ENCODE measurements at regions of chr19 and their contacts with region 1.

Region 1: GRCh38 chr19:10095948-10096621 is 6.4 kb downstream of the ANGPTL6 start:
- DNase-seq: peak; percentile 79 to 96
- H3K4me3 ChIP-seq: peak overlapping the region; percentile 29 to 57 (median 39)
- H3K27ac ChIP-seq: no peak overlapping the region
- H3K4me1 ChIP-seq: peaks cover 0 to 6% (median 2%) of the 10 kb centered on the region in 4 experiments; a peak in 3 of 7 replicates
- H3K27me3 ChIP-seq: peaks cover 8 to 29% (median 23%) of the 10 kb centered on the region in 4 experiments
- CTCF ChIP-seq: 0 out of 4 replicates have a peak, but pooled peaks of 1 of the 3 experiments have one; percentile 6
- EP300 ChIP-seq: no peak
- POLR2A ChIP-seq: peak in 1 of 2 experiments; percentile 71; a peak in 2 of 3 replicates
- RAD21 ChIP-seq: no peak

Region 2: DNA sequence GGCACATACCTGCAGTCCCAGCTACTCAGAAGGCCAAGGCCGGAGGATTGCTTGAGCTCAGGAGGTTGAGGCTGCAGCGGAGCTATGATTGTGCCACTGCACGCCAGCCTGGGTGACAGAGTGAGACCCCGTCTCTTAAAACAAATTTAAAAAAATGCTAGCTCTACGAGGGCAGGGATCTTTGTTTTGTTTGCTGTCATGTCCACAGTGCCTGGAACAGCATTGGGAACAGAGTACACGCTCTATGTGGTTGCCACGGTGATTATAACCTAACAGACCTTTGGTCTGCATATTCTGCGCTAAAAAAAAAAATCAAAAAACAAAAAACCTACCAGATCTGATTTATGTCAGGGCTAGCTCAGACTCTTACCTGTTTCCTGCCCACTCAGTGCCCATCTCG is 12.2 kb before region 1 on chr19:
- CTCF ChIA-PET with region 1: interaction called, 14 read pairs
- POLR2A ChIA-PET with region 1: interaction called, 3 read pairs
- DNase-seq: no peak
- H3K4me3 ChIP-seq: no peak overlapping the region
- H3K27ac ChIP-seq: no peak overlapping the region
- H3K4me1 ChIP-seq: peaks cover 0 to 4% (median 3%) of the 10 kb centered on the region in 4 experiments; a peak in 4 of 7 replicates
- H3K27me3 ChIP-seq: peaks cover 0 to 2% (median 0%) of the 10 kb centered on the region in 4 experiments; a peak in 1 of 7 replicates
- CTCF ChIP-seq: no peak
- EP300 ChIP-seq: no peak
- POLR2A ChIP-seq: no peak
- RAD21 ChIP-seq: no peak

Region 3: GRCh38 chr19:10106100-10106936 is 10.2 kb after region 1 on chr19 and contains the start of gene PPAN:
- CTCF ChIA-PET with region 1: interaction called, 5 read pairs
- POLR2A ChIA-PET with region 1: interaction called, 240 read pairs
- DNase-seq: peak; percentile 90 to 97
- H3K4me3 ChIP-seq: peak within 1 kb of the TSS; percentile 78 to 95 (median 93)
- H3K27ac ChIP-seq: peak within 1 kb of the TSS; percentile 92
- H3K4me1 ChIP-seq: peaks cover 0 to 4% (median 3%) of the 10 kb centered on the region in 4 experiments; a peak in 5 of 7 replicates
- H3K27me3 ChIP-seq: no peaks in the 10 kb centered on the region
- CTCF ChIP-seq: peak in 1 of 3 experiments; percentile 13; a peak in 1 of 4 replicates
- EP300 ChIP-seq: no peak
- POLR2A ChIP-seq: peak in 1 of 2 experiments; percentile 95; a peak in 2 of 3 replicates
- RAD21 ChIP-seq: no peak
- total RNA-seq, gene PPAN: 72.6 and 74.4 TPM in 2 replicates

Region 4: DNA sequence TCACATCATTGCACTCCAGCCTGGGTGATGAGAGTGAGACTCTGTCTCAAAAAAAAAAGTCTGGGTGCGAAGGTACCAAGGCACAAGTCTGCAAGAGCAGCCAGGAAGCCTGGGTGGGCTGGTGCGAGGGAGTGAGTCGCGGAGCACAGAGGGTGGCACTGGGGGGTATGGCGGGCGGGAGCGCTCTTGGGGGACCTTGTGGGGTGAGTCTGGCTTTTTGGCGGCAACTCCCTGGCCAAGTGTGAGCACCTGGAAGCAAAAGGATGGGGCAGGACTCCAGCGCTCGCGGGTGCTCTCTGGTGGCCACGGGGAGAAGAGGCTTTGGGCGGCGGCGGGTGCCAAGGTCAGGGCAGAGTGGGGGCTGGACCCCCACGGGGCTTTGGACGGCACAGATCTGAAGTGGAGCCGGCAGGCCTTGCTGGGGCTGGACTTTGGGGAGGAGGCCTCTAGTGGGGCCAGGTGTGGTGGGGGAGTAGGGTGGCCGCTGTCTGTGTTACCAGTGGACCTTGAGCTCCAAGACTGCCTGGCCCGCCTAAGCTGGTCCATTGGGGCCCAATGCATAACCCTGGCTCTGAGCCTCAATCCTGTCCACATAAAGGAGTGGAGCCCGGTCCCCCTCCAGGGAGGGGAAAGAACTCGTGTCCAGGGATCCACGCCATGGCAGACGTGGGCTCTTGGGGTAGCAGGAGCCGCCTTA is 17.0 kb after region 1 on chr19:
- CTCF ChIA-PET with region 1: interaction called, 18 read pairs
- POLR2A ChIA-PET with region 1: interaction called, 240 read pairs
- DNase-seq: peak in 1 of 2 experiments; percentile 94
- H3K4me3 ChIP-seq: no peak overlapping the region
- H3K27ac ChIP-seq: no peak overlapping the region
- H3K4me1 ChIP-seq: no peaks in the 10 kb centered on the region
- H3K27me3 ChIP-seq: no peaks in the 10 kb centered on the region
- CTCF ChIP-seq: peak; percentile 77 to 80 (median 79)
- EP300 ChIP-seq: no peak
- POLR2A ChIP-seq: peak in 1 of 2 experiments; percentile 31; a peak in 1 of 3 replicates
- RAD21 ChIP-seq: peak; percentile 53 to 69